Caco-2 (cell line): ENCODE measurements at regions of chr3 and their contacts with region 1.

Region 1: GRCh38 chr3:72847751-72848702 is at the start of gene SHQ1:
- DNase-seq: peak; percentile 92 to 93
- H3K4me3 ChIP-seq: peak within 1 kb of the TSS; percentile 87
- H3K4me3 Mint-ChIP-seq: peak within 1 kb of the TSS; percentile 93
- H3K27ac Mint-ChIP-seq: peak within 1 kb of the TSS; percentile 92
- H3K4me1 ChIP-seq: 0 out of 2 replicates have a peak, but pooled peaks cover 10% of the 10 kb centered on the region
- H3K4me1 Mint-ChIP-seq: peaks cover 8% of the 10 kb centered on the region
- H3K27me3 ChIP-seq: no peaks in the 10 kb centered on the region
- H3K27me3 Mint-ChIP-seq: no peaks in the 10 kb centered on the region
- CTCF ChIP-seq: no peak
- total RNA-seq, gene SHQ1: 18.8 and 20.2 TPM in 2 replicates

Region 2: DNA sequence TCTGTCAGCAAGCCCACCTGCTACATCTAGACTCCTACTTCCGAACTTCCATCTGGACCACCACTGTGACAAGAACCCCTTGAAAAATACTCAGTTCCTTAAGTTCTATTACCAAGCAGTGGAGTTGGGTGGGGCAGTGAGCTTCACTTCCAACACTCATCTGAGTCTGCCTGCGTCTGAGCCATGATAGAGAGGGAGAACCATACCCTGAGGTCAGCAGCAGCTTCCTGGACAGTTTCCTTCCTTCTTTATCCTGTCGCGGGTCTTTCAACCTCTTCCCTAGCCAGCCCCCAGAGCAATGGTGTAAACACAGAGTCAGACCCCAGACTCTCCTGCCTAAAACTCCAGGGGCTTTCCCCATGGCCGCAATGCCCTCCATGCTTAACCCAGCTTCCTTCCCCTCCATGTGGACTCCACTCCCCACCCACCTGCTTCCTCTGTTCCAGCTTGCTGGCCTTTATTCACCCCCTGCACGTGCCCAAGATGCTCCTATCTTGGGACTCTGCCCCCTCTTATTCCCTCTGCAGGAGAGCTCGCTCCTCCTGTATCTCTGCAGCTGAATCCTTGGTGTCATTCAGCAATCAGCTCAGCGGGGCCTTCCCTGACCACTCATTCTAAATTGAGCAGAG is 210.9 kb before region 1 on chr3:
- CTCF ChIA-PET with region 1: no interaction called
- POLR2A ChIA-PET with region 1: no interaction called
- intact Hi-C with region 1: no loop called
- DNase-seq: no peak
- H3K4me3 ChIP-seq: no peak overlapping the region
- H3K4me3 Mint-ChIP-seq: no peak overlapping the region
- H3K27ac Mint-ChIP-seq: no peak overlapping the region
- H3K4me1 ChIP-seq: no peaks in the 10 kb centered on the region
- H3K4me1 Mint-ChIP-seq: no peaks in the 10 kb centered on the region
- H3K27me3 ChIP-seq: no peaks in the 10 kb centered on the region
- H3K27me3 Mint-ChIP-seq: no peaks in the 10 kb centered on the region
- CTCF ChIP-seq: no peak

Region 3: DNA sequence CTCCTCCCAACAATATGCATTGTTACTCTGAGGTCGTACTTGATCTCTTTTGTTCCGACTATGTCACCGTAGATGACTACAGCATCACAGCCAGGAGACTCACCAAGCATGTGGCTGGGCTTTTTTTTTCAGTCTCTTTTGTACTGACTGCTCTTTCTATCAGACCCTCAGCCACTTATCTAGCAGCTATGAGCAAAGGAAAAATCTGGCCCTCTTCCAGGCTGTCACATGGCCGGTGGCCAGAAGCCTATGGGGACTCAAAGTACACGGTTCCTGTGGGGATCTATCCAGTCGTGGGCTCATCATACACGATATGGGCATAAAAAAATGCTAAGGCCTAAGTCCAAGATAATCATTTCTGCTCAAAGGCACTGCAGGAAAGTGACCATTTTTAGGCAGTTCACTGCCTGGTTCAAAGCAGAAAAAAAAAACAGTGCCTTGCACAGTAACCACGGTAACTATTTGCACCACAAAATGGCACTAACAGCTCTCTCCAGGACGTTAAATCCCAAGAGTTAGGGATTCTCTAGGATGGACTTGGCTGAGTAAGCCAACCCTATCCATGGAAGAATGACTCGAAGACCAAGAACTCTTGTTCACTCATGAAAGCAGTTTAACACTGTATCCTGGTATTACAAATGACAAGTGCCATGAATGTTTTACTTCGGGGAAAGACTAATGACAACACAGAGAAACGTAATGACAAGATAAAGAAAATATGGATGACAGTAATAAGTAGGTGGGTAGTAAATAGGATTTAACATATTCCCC is 50.1 kb before region 1 on chr3:
- CTCF ChIA-PET with region 1: no interaction called
- POLR2A ChIA-PET with region 1: no interaction called
- intact Hi-C with region 1: no loop called
- DNase-seq: no peak
- H3K4me3 ChIP-seq: no peak overlapping the region
- H3K4me3 Mint-ChIP-seq: no peak overlapping the region
- H3K27ac Mint-ChIP-seq: no peak overlapping the region
- H3K4me1 ChIP-seq: no peaks in the 10 kb centered on the region
- H3K4me1 Mint-ChIP-seq: no peaks in the 10 kb centered on the region
- H3K27me3 ChIP-seq: no peaks in the 10 kb centered on the region
- H3K27me3 Mint-ChIP-seq: no peaks in the 10 kb centered on the region
- CTCF ChIP-seq: no peak

Region 4: GRCh38 chr3:72872183-72872582 is 24.2 kb after region 1 on chr3:
- CTCF ChIA-PET with region 1: no interaction called
- POLR2A ChIA-PET with region 1: no interaction called
- intact Hi-C with region 1: loop called (anchors 1 kb)
- DNase-seq: no peak
- H3K4me3 ChIP-seq: no peak overlapping the region
- H3K4me3 Mint-ChIP-seq: no peak overlapping the region
- H3K27ac Mint-ChIP-seq: no peak overlapping the region
- H3K4me1 ChIP-seq: no peaks in the 10 kb centered on the region
- H3K4me1 Mint-ChIP-seq: peaks cover 9% of the 10 kb centered on the region
- H3K27me3 ChIP-seq: no peaks in the 10 kb centered on the region
- H3K27me3 Mint-ChIP-seq: peaks cover 4% of the 10 kb centered on the region
- CTCF ChIP-seq: no peak

Region 5: GRCh38 chr3:72887705-72888545 is 39.9 kb after region 1 on chr3 and contains the start of gene GXYLT2:
- CTCF ChIA-PET with region 1: interaction called, 9 read pairs
- POLR2A ChIA-PET with region 1: no interaction called
- intact Hi-C with region 1: loop called (anchors 1 kb)
- DNase-seq: peak; percentile 74
- H3K4me3 ChIP-seq: peak within 1 kb of the TSS; percentile 58
- H3K4me3 Mint-ChIP-seq: peak within 1 kb of the TSS; percentile 94
- H3K27ac Mint-ChIP-seq: peak within 1 kb of the TSS; percentile 33
- H3K4me1 ChIP-seq: peaks cover 4% of the 10 kb centered on the region; the same call in 1 of the 2 replicates
- H3K4me1 Mint-ChIP-seq: peaks cover 12% of the 10 kb centered on the region
- H3K27me3 ChIP-seq: no peaks in the 10 kb centered on the region
- H3K27me3 Mint-ChIP-seq: no peaks in the 10 kb centered on the region
- CTCF ChIP-seq: no peak
- total RNA-seq, gene GXYLT2: 3.4 and 4.8 TPM in 2 replicates

Region 6: DNA sequence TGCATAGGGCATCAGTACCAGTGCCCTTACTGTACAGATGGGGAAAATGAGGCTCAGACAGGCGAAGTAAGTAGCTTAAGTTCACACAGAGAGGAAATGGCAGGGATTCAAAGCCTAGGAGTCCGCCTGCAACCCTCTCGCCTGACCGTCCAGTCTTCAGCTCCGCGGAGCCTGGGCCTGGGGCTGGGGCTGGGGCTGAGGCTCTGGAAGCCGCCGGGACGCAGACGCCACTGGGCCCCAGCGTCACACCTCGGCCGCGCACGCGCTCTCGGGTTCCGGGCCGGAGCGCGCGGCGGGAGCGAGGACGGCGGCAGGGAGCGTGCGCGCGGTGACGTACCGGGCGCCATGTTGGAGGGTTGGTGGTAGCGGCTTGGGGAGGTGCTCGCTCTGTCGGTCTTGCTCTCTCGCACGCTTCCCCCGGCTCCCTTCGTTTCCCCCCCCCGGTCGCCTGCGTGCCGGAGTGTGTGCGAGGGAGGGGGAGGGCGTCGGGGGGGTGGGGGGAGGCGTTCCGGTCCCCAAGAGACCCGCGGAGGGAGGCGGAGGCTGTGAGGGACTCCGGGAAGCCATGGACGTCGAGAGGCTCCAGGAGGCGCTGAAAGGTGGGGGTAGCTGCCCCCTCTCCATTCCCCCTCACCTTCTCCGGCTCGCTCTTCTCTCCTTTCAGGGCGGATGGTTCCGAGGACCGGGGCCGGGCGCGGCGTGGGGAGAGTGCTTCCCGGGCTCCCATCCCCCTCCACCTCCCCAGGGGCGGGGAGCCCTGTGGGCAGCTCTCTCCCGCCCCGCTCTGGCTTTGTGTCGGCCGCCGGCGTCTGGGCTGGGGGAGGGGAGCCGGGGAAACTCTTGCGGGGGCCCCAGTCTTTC is 148.7 kb after region 1 on chr3 and contains the start of gene PPP4R2:
- CTCF ChIA-PET with region 1: interaction called, 4 read pairs
- POLR2A ChIA-PET with region 1: no interaction called
- intact Hi-C with region 1: loop called (anchors 1 kb)
- DNase-seq: peak; percentile 90 to 94
- H3K4me3 ChIP-seq: peak within 1 kb of the TSS; percentile 91
- H3K4me3 Mint-ChIP-seq: peak within 1 kb of the TSS; percentile 98
- H3K27ac Mint-ChIP-seq: peak within 1 kb of the TSS; percentile 90
- H3K4me1 ChIP-seq: peaks cover 29% of the 10 kb centered on the region
- H3K4me1 Mint-ChIP-seq: peaks cover 25% of the 10 kb centered on the region
- H3K27me3 ChIP-seq: no peaks in the 10 kb centered on the region
- H3K27me3 Mint-ChIP-seq: no peaks in the 10 kb centered on the region
- CTCF ChIP-seq: peak in 1 of 2 experiments; percentile 0
- total RNA-seq, gene PPP4R2: 91.3 and 93.6 TPM in 2 replicates

Region 7: GRCh38 chr3:73056014-73056844 is 208.2 kb after region 1 on chr3:
- CTCF ChIA-PET with region 1: interaction called, 5 read pairs
- POLR2A ChIA-PET with region 1: no interaction called
- intact Hi-C with region 1: loop called (anchors 1 kb)
- DNase-seq: no peak
- H3K4me3 ChIP-seq: no peak overlapping the region
- H3K4me3 Mint-ChIP-seq: no peak overlapping the region
- H3K27ac Mint-ChIP-seq: no peak overlapping the region
- H3K4me1 ChIP-seq: peaks cover 20% of the 10 kb centered on the region
- H3K4me1 Mint-ChIP-seq: peaks cover 21% of the 10 kb centered on the region
- H3K27me3 ChIP-seq: no peaks in the 10 kb centered on the region
- H3K27me3 Mint-ChIP-seq: no peaks in the 10 kb centered on the region
- CTCF ChIP-seq: peak; percentile 30 to 48

Region 8: DNA sequence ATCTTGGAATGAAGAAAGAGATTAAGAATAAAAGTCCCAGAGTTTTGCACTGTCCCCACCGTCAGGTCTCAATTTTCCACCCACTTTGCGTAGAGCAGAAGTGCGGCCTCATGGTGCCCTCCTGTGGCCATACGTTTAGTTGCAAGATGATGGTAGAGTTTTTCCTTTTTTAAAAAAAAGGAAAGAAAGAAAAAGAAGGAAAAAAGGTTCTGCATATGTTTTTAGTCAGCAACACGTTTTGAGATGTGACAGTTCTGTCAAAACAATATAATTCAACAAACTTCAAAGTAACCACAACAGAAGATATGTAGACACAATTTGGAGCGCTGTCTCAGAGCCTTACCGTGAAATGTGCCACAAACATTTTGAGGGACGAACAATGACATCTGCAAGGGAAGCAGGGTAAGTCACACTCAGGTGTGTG is 238.1 kb after region 1 on chr3:
- CTCF ChIA-PET with region 1: interaction called, 6 read pairs
- POLR2A ChIA-PET with region 1: no interaction called
- intact Hi-C with region 1: loop called (anchors 1 kb)
- DNase-seq: peak in 1 of 2 experiments; percentile 59
- H3K4me3 ChIP-seq: no peak overlapping the region
- H3K4me3 Mint-ChIP-seq: no peak overlapping the region
- H3K27ac Mint-ChIP-seq: no peak overlapping the region
- H3K4me1 ChIP-seq: no peaks in the 10 kb centered on the region
- H3K4me1 Mint-ChIP-seq: no peaks in the 10 kb centered on the region
- H3K27me3 ChIP-seq: no peaks in the 10 kb centered on the region
- H3K27me3 Mint-ChIP-seq: no peaks in the 10 kb centered on the region
- CTCF ChIP-seq: peak; percentile 79 to 85